GM10248 (cell line): ENCODE measurements at regions of chr6 and their contacts with region 1.

Region 1: DNA sequence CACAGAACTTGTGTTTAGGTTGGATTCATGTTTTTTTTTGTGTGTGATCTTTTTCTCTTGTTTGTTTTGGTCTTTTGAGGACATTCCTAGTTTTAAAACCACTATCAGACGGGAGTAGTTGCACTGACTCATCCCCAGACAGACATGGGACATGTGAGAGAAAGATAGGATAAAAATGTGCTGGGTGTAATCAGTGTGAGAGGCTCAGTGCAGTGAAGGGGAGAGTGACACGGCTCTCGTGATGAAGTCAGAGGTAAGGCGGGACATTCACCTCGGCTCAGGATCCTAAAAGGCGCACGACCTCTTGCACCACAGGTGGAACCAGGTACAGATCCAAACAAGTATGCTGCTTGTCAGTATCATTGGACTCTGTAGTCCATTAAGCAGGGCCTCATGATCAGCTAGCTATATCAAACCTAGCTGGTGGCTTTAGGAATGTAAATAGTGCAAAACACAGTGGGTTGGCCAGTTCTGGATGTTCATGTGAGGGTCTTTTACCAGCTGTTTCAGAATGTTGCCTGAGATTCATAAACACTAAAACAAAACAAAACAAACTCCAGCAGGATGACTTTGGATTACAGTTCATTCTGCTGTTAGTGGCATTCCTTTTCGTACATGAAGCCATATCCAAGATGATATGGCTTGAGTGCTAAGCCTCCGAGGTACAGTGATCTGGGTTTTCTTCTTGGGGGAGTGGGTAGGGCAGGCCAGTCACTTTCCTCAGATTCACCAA is 18.0 kb downstream of the FOXO3 start:
- DNase-seq: no peak
- CTCF ChIP-seq: no peak

Region 2: DNA sequence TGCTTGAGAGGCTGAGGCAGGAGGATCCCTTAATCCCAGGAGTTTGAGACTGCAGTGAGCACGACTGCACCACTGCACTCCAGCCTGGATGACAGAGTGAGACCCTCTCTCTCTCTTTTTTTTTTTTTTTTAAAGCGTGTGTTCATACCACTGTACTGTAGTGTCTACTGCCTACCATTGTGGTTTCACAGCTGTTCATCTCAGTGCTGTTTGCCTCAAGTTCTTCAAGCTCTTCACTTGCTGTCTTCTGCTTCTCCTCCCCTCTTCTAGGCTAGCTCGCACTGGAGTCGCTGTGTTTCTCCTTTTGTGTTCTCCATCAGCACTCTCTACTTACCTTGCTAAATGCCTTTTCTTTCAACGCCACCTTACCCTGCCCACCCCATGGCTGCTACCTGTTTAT is 10.7 kb before region 1 on chr6:
- CTCF ChIA-PET with region 1: interaction called, 10 read pairs
- POLR2A ChIA-PET with region 1: no interaction called
- DNase-seq: no peak
- CTCF ChIP-seq: no peak

Region 3: DNA sequence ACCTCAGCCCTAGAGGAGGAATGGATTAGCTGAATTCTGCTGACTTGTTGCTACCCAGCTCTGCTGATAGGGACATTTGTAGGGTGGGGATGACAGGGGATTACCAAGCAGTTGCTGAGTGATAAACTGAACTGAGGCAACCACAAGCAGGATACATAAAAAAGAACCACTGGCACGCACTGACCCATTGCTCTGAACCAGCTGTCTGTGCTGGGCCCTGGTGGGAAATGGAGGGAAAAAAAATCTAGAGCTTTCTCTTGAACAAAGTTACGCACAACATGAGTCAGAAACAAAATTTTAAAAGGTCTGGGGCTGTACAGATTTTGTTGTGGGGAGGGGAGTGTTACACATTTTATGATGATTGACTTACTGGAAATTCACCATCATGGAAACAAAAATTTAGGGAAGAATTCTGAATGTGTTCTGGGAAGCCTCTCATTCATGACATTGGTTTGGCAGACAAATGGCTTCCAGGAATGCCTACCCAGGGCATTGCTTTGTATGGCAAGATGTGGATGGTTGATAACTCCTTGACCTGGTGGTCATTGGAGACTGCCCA is 19.6 kb after region 1 on chr6:
- CTCF ChIA-PET with region 1: interaction called, 15 read pairs
- POLR2A ChIA-PET with region 1: interaction called, 5 read pairs
- DNase-seq: peak; percentile 14
- CTCF ChIP-seq: no peak

Region 4: DNA sequence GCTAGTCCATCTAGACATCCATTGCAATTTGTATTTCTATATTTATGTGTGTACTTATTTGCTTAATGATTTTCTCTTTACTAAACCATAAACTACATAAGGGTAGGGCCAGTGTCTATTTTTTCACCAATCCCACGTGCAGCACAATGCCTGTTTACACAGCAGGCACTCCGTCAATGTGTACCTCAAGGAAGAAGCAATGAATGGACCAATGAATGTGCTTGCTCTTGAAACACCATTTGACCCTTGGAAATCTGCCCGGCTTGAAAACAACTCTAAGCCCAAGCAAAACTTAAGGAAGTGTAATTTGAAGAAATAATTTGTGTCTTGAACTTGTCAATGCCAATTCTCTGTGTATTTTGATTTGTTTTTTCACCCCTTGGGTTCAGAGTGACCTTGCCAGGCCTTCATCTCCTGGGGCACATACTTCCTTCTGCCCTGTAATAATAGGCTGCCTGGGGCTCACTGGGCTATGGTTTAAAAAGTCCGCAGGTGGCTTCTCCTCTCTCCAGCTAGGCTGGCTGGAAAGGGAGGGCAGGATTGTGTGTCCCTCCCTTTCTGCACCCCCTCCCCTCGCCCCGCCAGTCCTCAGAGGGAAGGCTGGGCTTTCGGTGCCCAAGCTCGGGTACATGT is 128.7 kb after region 1 on chr6:
- CTCF ChIA-PET with region 1: no interaction called
- POLR2A ChIA-PET with region 1: no interaction called
- DNase-seq: no peak
- CTCF ChIP-seq: no peak